H1 (cell line): ENCODE measurements at regions of chr1 and their contacts with region 1.

Region 1: DNA sequence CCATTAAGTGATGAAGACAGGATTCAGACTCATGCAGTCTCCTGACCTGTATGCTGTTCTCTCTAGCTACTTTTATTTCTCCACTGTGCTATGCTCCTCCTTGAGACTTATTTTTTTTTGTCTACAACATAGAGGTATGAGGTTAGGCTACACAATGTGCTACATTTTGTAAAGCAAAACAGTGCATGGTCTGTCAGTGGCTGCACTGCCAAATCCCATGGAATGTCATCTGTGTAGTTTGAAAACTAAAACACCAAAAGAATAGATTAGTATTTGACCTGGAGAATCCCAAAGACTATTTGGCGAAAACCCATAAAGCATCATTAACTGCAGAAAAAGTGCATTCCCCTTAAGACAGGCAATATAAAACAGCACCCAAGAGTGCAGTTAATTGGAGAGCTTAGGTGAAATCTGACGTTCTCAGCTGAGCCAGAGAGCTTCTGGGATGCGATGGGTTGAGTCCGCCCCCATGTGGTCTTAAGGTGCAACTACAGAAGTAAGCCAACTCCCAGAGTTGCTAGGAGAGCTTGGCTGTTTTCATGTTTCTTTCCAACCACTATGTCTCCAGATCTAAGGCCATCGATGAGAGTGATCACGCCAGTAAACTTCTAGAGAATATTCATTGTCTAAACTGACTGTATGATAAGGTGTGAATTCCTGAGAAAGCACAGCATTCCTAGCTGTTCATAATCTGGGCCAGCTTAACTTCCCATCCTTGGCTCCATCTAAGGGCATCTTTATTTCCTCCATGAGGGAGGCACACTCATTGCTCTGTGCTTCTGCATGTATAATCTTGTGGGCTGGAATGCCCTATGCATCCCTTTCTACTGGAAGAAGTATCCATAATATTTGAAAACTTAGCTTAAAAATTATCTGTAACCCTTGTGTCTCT is 20.7 kb upstream of the CYP2J2 start:
- DNase-seq: peak in 1 of 2 experiments; percentile 59
- H3K4me3 ChIP-seq: no peak overlapping the region
- H3K27ac ChIP-seq: no peak overlapping the region
- H3K4me1 ChIP-seq: no peaks in the 10 kb centered on the region
- H3K27me3 ChIP-seq: no peaks in the 10 kb centered on the region
- CTCF ChIP-seq: peak; percentile 78 to 93 (median 85)
- EP300 ChIP-seq: no peak
- POLR2A ChIP-seq: no peak
- RAD21 ChIP-seq: peak; percentile 94 to 96

Region 2: GRCh38 chr1:59845091-59845490 is 102.2 kb before region 1 on chr1:
- CTCF ChIA-PET with region 1: no interaction called
- POLR2A ChIA-PET with region 1: no interaction called
- DNase-seq: no peak
- H3K4me3 ChIP-seq: no peak overlapping the region
- H3K27ac ChIP-seq: no peak overlapping the region
- H3K4me1 ChIP-seq: no peaks in the 10 kb centered on the region
- H3K27me3 ChIP-seq: no peaks in the 10 kb centered on the region
- CTCF ChIP-seq: no peak
- EP300 ChIP-seq: no peak
- POLR2A ChIP-seq: no peak
- RAD21 ChIP-seq: no peak

Region 3: DNA sequence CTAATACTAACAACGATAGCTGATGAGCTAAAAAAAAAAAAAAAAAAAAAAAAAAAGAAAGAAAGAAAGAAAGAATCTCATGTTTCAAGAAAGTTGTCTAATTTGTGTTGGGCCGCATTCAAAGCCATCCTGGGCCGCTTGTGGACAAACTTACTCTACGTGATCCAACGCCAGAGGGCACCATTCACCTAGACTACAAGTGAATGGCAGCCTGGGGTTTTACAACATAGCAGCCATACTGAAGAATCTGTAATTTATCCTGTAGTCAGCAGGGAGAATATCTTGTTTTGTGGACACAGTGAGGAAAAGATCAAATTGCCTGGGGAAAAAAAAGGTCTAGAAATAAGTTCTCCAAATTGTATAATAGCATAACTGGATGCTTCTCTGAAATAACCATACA is 67.7 kb before region 1 on chr1:
- CTCF ChIA-PET with region 1: interaction called, 323 read pairs
- POLR2A ChIA-PET with region 1: interaction called, 7 read pairs
- DNase-seq: peak in 1 of 2 experiments; percentile 75
- H3K4me3 ChIP-seq: no peak overlapping the region
- H3K27ac ChIP-seq: no peak overlapping the region
- H3K4me1 ChIP-seq: no peaks in the 10 kb centered on the region
- H3K27me3 ChIP-seq: no peaks in the 10 kb centered on the region
- CTCF ChIP-seq: peak; percentile 45 to 73 (median 71)
- EP300 ChIP-seq: no peak
- POLR2A ChIP-seq: no peak
- RAD21 ChIP-seq: peak; percentile 81 to 82

Region 4: DNA sequence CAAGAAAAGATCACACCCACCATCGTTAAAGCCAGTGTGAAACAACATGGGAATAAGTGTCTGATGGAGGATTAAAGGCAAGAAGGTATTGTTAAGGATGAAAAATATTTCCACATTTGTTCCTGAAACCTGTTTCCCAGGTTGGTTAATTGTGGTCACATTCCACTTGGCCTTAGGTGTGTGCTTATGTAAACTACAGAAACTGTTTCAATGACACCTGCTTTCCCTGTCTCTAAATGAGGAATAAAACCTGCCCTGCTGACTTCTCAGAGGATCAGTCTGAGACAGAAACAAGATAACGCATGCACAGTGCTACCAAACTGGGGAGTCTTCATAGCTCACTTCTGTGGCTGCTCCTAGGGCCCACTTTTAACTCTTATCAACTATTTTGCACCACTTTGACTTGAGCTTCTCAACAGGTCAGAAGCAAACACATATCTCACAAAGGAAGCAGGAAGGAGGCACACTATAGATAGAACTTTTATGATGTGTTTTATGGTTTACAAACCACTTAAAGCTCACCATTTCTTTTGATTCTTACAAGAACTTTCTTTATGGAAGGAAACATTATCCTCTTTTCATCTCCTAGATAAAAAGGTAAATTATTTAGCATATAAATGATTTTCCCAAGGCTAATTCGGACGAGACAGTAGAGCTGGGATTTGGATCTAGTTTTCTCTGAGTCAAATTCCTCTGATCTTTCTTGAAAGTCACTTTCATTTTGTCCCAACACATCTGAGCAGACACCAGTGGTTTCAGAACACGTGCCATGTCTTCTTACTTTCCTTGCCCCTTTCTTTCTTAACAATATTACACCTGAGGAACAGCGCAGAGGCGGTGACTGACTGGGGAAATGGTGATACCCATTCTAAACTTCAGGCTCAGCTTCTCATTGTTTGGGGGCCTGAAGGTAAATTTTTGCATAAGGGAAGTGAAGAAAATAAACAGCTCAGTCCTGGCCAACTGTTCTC is 54.2 kb before region 1 on chr1:
- CTCF ChIA-PET with region 1: interaction called, 323 read pairs
- POLR2A ChIA-PET with region 1: interaction called, 3 read pairs
- DNase-seq: no peak
- H3K4me3 ChIP-seq: no peak overlapping the region
- H3K27ac ChIP-seq: no peak overlapping the region
- H3K4me1 ChIP-seq: no peaks in the 10 kb centered on the region
- H3K27me3 ChIP-seq: no peaks in the 10 kb centered on the region
- CTCF ChIP-seq: no peak
- EP300 ChIP-seq: no peak
- POLR2A ChIP-seq: no peak
- RAD21 ChIP-seq: no peak

Region 5: GRCh38 chr1:59917026-59917784 is 30.1 kb before region 1 on chr1:
- CTCF ChIA-PET with region 1: interaction called, 14 read pairs
- POLR2A ChIA-PET with region 1: no interaction called
- DNase-seq: no peak
- H3K4me3 ChIP-seq: no peak overlapping the region
- H3K27ac ChIP-seq: no peak overlapping the region
- H3K4me1 ChIP-seq: no peaks in the 10 kb centered on the region
- H3K27me3 ChIP-seq: no peaks in the 10 kb centered on the region
- CTCF ChIP-seq: no peak
- EP300 ChIP-seq: no peak
- POLR2A ChIP-seq: no peak
- RAD21 ChIP-seq: no peak

Region 6: DNA sequence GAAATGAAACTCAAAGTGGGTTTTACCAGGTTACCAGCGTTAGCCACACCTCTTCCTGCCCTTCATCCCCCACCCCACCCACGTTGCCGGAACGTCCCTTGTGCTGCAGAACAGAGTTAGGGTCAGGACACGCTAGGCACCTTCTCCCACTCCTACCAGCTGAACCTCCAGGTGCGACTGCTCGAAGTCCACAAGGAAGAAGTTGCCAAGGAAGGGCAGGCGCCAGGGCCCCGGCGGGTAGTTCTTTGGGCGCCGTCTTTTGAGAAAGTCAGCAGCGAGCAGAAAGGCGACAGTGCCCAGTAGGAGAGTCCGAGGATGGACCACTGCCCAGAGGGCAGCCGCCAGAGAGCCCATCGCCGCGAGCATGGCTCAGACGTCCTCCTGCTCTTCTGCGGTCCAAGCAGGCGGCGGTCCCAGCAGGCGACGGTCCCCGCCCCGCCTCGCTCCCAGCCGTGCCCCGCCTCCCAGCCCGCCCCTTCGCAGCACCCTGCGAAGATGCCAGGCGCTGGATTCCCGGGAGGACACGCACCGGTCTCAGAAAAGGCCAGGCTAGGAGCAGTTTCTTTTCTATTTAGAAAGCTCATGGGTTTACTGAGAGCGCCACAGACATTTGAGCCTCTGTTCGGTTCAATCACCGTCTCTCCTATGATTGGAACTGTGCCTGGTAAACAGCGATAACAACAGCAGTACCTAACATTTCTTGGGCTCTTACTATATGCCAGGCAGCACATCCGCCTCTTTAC is 20.7 kb before region 1 on chr1 and contains the start of gene CYP2J2:
- CTCF ChIA-PET with region 1: interaction called, 14 read pairs
- POLR2A ChIA-PET with region 1: no interaction called
- DNase-seq: peak in 1 of 2 experiments; percentile 76
- H3K4me3 ChIP-seq: peak within 1 kb of the TSS; percentile 29 to 72 (median 56)
- H3K27ac ChIP-seq: no peak within 1 kb of the TSS
- H3K4me1 ChIP-seq: no peaks in the 10 kb centered on the region
- H3K27me3 ChIP-seq: peaks cover 2 to 19% (median 12%) of the 10 kb centered on the region in 4 experiments
- CTCF ChIP-seq: no peak
- EP300 ChIP-seq: no peak
- POLR2A ChIP-seq: no peak
- RAD21 ChIP-seq: no peak
- total RNA-seq, gene CYP2J2: 2.1 and 2.2 TPM in 2 replicates